BJ (cell line): ENCODE measurements at regions of chr3 and their contacts with region 1.

Region 1: GRCh38 chr3:51384726-51385473 is at the start of gene MANF:
- DNase-seq: peak; percentile 88
- H3K4me3 ChIP-seq: peak within 1 kb of the TSS; percentile 91
- H3K27me3 ChIP-seq: no peaks in the 10 kb centered on the region
- CTCF ChIP-seq: no peak
- polyA plus RNA-seq, gene MANF: 21.5 and 58.1 TPM in 2 replicates

Region 2: DNA sequence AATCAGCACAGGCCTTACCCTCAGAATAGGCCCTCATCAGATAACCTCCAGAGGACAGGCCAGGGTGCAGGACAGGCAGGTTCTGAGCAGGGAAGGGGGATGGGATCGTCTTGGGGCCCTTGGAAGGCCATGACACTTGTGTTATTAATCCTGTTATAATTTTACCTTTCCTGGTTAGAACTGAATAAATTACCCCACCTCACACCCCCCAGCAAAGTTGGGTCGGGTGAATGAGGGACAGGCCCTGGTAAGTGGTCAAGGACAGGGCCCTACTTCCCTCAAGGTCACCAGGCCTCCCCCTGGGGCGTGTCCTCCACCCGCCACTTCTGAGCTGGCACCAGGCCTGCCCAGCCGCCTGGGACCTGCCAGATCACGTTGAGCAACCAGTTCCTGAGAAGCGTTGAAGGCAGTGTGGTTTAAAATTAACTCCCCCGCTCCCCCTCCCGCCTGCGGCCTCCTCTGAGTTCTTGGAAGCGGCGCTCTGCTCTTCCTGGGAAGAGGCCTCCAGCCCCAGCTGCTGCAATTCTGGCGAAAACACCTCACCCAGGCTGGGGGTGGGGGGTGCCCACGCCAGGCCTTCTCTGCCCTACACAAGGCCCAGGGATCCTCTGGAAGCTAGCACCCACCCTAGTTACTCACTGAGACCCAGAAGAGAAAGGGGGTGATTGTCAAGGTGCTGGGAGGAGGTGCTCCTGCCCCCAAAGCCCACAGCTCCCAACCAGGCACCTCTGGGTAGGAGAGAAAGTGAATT is 783.9 kb before region 1 on chr3:
- CTCF ChIA-PET with region 1: interaction called, 5 read pairs
- POLR2A ChIA-PET with region 1: interaction called, 11 read pairs
- DNase-seq: peak; percentile 92
- H3K4me3 ChIP-seq: no peak overlapping the region
- H3K27me3 ChIP-seq: no peaks in the 10 kb centered on the region
- CTCF ChIP-seq: no peak

Region 3: DNA sequence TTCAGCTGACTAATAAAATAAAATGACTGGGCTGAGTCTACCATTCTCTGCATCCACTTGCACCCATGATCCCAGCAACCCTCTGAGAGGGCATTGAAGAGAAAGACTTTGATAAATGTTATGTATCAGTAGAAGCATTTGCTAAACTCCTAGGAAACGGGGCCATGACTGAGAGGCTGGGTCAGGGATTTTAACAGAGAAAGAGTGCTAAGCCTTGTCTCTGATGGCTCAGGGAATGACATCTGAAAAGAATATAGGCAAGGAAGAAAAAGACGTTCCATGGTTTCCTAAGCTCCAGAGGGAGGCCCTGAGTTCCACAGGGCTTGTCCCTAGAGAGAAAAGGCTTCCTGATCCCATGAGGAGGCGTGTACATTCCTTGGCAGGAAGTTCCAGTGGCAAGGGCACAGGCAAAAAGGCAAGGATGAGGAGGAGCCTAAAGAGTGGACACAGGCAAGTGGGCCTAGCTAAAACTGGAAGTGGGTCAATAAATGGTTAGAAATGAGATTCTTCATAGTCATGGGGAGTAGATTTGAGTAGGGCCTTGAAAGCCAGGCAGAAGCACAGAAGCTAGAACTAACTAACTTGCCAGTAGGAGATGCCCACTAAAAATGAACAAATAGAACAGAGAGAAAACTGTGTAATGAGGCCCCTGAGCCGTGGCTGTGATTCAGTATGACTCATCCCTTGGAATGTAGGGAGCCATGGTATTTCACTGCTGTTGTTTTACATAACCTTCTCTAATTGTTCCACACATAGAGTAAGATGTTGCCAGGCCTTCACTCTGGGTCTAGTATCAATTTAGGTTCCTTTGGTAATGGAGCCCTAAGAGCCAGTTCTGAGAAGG is 44.7 kb before region 1 on chr3:
- CTCF ChIA-PET with region 1: interaction called, 23 read pairs
- POLR2A ChIA-PET with region 1: no interaction called
- DNase-seq: peak; percentile 82
- H3K4me3 ChIP-seq: no peak overlapping the region
- H3K27me3 ChIP-seq: no peaks in the 10 kb centered on the region
- CTCF ChIP-seq: no peak

Region 4: DNA sequence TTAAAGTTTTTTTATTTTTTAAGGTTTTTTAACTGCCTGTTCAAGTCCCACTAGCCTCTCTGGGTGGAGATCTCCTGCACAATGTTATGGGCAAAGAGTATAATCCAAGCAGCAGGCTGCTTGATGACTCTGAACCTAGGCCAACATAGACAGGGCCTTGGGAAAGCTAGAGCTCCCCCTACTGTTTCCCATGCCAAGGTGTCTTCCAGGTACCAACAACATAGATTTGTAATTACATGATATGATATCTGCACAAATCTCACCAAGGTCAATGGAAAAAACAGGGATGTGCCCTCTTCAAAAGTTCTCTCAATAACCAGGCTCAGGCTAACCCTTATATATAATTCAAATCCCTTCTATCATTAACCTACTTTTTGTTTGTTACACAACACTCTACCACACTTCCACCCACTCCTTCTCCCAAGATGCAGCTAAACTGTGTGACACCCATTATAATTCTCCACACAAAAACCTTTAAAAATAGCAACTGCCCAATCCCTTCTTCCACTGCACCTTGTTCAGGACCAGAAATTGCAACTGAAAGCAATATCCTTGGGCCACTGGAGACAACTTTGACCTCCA is 49.9 kb after region 1 on chr3:
- CTCF ChIA-PET with region 1: interaction called, 10 read pairs
- POLR2A ChIA-PET with region 1: no interaction called
- DNase-seq: no peak
- H3K4me3 ChIP-seq: no peak overlapping the region
- H3K27me3 ChIP-seq: no peaks in the 10 kb centered on the region
- CTCF ChIP-seq: peak; percentile 73

Region 5: GRCh38 chr3:51682079-51682478 is 297.2 kb after region 1 on chr3:
- CTCF ChIA-PET with region 1: interaction called, 34 read pairs
- POLR2A ChIA-PET with region 1: no interaction called
- DNase-seq: peak; percentile 52
- H3K4me3 ChIP-seq: no peak overlapping the region
- H3K27me3 ChIP-seq: no peaks in the 10 kb centered on the region
- CTCF ChIP-seq: peak; percentile 83